Motor neuron (in vitro differentiated cells): ENCODE measurements at regions of chrX and their contacts with region 1.

Region 1: GRCh38 chrX:38175140-38175539 is 45.5 kb downstream of the SRPX start:
- ATAC-seq: peak; percentile 52 to 84 (median 72)
- H3K4me3 ChIP-seq: no peak overlapping the region
- H3K27ac ChIP-seq: no peak overlapping the region
- H3K4me1 ChIP-seq: no peaks in the 10 kb centered on the region

Region 2: GRCh38 chrX:38275615-38276014 is 100.5 kb after region 1 on chrX:
- in situ Hi-C with region 1: loop called in 1 of 9 experiments (anchors 25 kb)
- ATAC-seq: peak in 3 of 8 experiments; percentile 59 to 97 (median 94)
- H3K4me3 ChIP-seq: no peak overlapping the region
- H3K27ac ChIP-seq: no peak overlapping the region
- H3K4me1 ChIP-seq: no peaks in the 10 kb centered on the region